ENCODE measurements at regions of chr1 and their contacts with region 1.

Region 1: GRCh38 chr1:206766251-206766856 is 4.2 kb upstream of the IL19 start:
- DNase-seq: no peak
- ATAC-seq: peak; percentile 64
- H3K4me3 Mint-ChIP-seq: peak overlapping the region; percentile 42
- H3K27ac Mint-ChIP-seq: peak overlapping the region; percentile 73
- H3K4me1 Mint-ChIP-seq: peaks cover 51% of the 10 kb centered on the region
- H3K27me3 Mint-ChIP-seq: no peaks in the 10 kb centered on the region
- CTCF ChIP-seq: no peak

Region 2: GRCh38 chr1:206790502-206791250 is 24.3 kb after region 1 on chr1:
- CTCF ChIA-PET with region 1: interaction called, 7 read pairs
- POLR2A ChIA-PET with region 1: interaction called, 16 read pairs
- intact Hi-C with region 1: no loop called
- DNase-seq: no peak
- ATAC-seq: peak; percentile 59
- H3K4me3 Mint-ChIP-seq: peak overlapping the region; percentile 78
- H3K27ac Mint-ChIP-seq: peak overlapping the region; percentile 94
- H3K4me1 Mint-ChIP-seq: peaks cover 76% of the 10 kb centered on the region
- H3K27me3 Mint-ChIP-seq: no peaks in the 10 kb centered on the region
- CTCF ChIP-seq: no peak

Region 3: GRCh38 chr1:206846487-206846886 is 80.1 kb after region 1 on chr1:
- CTCF ChIA-PET with region 1: no interaction called
- POLR2A ChIA-PET with region 1: no interaction called
- intact Hi-C with region 1: no loop called
- DNase-seq: no peak
- ATAC-seq: no peak
- H3K4me3 Mint-ChIP-seq: no peak overlapping the region
- H3K27ac Mint-ChIP-seq: no peak overlapping the region
- H3K4me1 Mint-ChIP-seq: no peaks in the 10 kb centered on the region
- H3K27me3 Mint-ChIP-seq: peaks cover 8% of the 10 kb centered on the region
- CTCF ChIP-seq: no peak

Measured in activated B cell treated with CpG ODN at 0.5 μM for 24 hours (primary cell).